ENCODE measurements at regions of chr1 and their contacts with region 1.

Region 1: DNA sequence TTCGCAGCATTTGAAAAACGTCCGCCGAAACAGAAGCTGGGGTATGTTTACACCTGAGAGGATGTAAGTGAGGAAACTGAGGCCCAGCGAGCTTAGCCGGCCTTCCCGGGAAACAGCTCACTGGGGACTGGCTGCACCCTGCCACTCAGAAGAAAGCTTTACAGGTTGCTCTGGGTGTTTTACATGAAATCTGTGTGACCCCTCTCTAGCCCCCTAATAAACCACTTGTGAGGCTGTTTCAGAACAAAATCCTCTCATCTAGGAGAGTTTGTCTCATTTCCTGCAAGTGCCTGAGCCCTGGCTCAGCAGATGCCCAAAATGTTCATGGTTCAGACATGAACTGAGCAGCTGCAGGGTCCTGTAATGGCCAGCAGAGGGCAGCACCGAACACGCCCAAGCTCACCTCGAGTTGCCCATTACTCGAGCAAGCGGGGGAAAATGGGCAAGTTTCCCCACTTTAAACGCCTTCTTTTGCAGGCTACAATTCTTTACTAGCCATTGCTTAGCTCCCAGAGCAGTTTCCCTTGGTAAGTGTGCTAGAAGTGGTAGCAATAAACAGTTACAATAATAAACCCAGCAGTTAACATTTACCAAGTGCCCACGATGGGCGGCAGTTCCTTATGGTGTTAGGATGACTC is 76.4 kb downstream of the FHAD1 start:
- DNase-seq: peak; percentile 67 to 70
- H3K4me3 ChIP-seq: no peak overlapping the region
- H3K4me3 Mint-ChIP-seq: no peak overlapping the region
- H3K27ac Mint-ChIP-seq: no peak overlapping the region
- H3K4me1 ChIP-seq: peaks cover 8% of the 10 kb centered on the region; the same call in 1 of the 2 replicates
- H3K4me1 Mint-ChIP-seq: peaks cover 14% of the 10 kb centered on the region
- H3K27me3 ChIP-seq: no peaks in the 10 kb centered on the region
- H3K27me3 Mint-ChIP-seq: no peaks in the 10 kb centered on the region
- CTCF ChIP-seq: peak; percentile 71 to 89

Region 2: DNA sequence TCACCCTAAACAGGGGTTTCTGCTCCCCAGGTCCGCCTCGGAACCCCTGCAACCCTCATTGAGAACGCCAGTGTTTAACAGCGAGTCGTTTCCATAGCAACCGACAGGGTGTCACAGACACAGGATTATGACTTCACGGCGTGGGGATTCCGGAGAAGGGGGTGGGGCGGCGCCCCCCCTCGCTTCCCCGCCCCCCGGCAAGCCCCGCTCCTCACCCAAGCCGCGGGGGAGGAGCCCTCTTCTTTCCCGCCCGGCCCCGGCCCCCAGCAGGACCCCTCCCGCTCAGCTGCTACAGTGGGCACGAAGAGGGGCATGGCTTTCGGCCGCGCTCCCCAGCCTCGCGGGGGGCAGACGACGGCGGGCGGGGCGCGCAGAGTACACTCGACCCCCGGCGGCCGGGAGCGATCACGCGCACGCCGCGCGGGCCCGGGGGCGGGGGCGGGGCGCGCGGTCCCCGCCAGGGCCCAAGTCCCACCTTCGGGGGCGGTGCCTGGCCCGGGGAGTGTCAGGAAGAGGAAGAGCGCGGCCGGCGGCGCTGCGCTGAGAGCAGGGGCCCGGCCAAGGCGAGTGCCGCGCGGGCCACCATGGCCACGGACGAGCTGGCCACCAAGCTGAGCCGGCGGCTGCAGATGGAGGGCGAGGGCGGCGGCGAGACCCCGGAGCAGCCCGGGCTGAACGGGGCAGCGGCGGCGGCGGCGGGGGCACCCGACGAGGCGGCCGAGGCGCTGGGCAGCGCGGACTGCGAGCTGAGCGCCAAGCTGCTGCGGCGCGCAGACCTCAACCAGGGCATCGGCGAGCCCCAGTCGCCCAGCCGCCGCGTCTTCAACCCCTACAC is 86.1 kb after region 1 on chr1 and contains the start of gene EFHD2:
- CTCF ChIA-PET with region 1: no interaction called
- POLR2A ChIA-PET with region 1: no interaction called
- intact Hi-C with region 1: loop called (anchors 5 kb)
- DNase-seq: peak; percentile 72 to 84
- H3K4me3 ChIP-seq: peak within 1 kb of the TSS; percentile 68
- H3K4me3 Mint-ChIP-seq: peak within 1 kb of the TSS; percentile 84
- H3K27ac Mint-ChIP-seq: peak within 1 kb of the TSS; percentile 90
- H3K4me1 ChIP-seq: peaks cover 12% of the 10 kb centered on the region; the same call in 1 of the 2 replicates
- H3K4me1 Mint-ChIP-seq: peaks cover 7% of the 10 kb centered on the region
- H3K27me3 ChIP-seq: no peaks in the 10 kb centered on the region
- H3K27me3 Mint-ChIP-seq: no peaks in the 10 kb centered on the region
- CTCF ChIP-seq: no peak
- total RNA-seq, gene EFHD2: 29.5 and 30.3 TPM in 2 replicates

Region 3: GRCh38 chr1:15430787-15431570 is 107.5 kb after region 1 on chr1:
- CTCF ChIA-PET with region 1: interaction called, 32 read pairs
- POLR2A ChIA-PET with region 1: no interaction called
- intact Hi-C with region 1: loop called (anchors 1 kb)
- DNase-seq: peak; percentile 61 to 79
- H3K4me3 ChIP-seq: no peak overlapping the region
- H3K4me3 Mint-ChIP-seq: no peak overlapping the region
- H3K27ac Mint-ChIP-seq: no peak overlapping the region
- H3K4me1 ChIP-seq: no peaks in the 10 kb centered on the region
- H3K4me1 Mint-ChIP-seq: no peaks in the 10 kb centered on the region
- H3K27me3 ChIP-seq: no peaks in the 10 kb centered on the region
- H3K27me3 Mint-ChIP-seq: no peaks in the 10 kb centered on the region
- CTCF ChIP-seq: peak; percentile 87 to 90

Region 4: DNA sequence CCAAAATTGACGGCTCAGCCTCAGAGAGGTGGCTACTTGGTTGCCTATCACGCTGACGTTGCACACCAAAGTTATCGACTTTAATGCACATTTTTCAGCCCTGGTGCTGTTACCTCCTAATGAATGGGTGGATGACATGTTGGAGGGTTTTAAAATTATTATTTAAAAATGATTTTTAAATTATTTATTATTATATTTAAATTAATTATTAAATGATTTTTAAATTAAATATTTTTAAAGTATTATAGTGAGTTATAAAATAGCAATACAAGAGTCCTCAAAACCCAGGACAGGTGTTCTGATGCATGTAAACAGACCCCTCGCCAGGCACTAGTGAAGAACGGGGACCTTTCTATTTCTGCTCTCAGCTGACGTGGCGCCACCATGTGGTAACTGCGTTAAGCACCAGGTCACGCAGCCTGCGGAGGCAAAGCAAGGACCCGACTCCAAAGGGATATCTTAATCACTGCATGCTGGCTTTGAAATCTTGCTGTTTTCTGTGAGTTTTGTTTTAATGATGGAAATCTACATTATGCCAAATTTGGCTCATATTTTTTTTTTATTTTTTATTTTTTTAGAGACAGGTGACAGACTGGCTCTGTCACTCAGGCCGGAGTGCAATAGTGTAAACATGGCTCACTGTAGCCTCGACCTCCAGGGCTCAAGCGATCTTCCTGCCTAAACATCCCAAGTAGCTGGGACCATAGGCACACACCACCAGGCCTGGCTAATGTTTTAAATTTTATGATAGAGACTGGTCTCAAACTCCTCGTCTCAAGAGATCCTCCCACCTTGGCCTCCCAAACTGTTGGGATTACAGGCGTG is 177.9 kb after region 1 on chr1:
- CTCF ChIA-PET with region 1: no interaction called
- POLR2A ChIA-PET with region 1: no interaction called
- intact Hi-C with region 1: loop called (anchors 1 kb)
- DNase-seq: peak; percentile 52 to 65
- H3K4me3 ChIP-seq: no peak overlapping the region
- H3K4me3 Mint-ChIP-seq: no peak overlapping the region
- H3K27ac Mint-ChIP-seq: no peak overlapping the region
- H3K4me1 ChIP-seq: no peaks in the 10 kb centered on the region
- H3K4me1 Mint-ChIP-seq: no peaks in the 10 kb centered on the region
- H3K27me3 ChIP-seq: no peaks in the 10 kb centered on the region
- H3K27me3 Mint-ChIP-seq: no peaks in the 10 kb centered on the region
- CTCF ChIP-seq: peak; percentile 71 to 73